Right lobe of liver (tissue), 6 donors: ENCODE measurements at regions of chr16 and their contacts with region 1.

Region 1: DNA sequence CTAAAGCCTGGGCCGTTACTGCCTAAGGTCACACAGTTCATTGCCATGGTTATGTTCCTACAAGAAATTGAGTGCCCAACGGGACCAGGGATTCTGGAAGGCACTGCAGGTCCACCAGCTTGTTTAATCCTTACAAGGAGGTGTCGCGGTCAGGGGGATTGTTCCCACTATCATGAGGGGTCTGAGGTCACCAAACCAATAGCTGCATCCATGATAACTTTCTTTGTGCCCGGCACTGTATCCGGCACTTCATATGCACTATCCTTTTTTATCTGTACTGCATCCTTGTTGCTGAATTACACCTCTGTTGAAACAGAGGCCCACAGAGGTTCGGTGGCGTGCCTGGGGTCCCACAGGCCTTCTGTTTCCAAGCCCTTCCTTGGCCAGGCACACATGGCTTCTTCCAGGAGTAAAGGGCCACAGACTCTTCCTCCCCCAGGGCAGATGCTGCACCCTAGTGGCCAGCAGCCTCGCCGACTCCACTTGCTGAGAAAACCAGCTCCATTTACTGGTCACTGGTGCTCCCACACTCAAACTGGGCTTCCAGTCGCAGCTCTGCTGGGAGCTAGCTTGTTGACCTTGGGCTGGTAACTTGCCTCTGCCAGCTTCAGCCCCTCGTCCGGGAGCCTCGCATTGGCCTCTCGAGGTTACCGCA is 82.0 kb upstream of the PLCG2 start:
- DNase-seq: peak; percentile 68 to 77 (median 71)
- ATAC-seq: peak; percentile 69 to 84 (median 75)
- H3K4me3 ChIP-seq: no peak overlapping the region
- H3K27ac ChIP-seq: peak overlapping the region in 1 of 3 donors; percentile 4
- H3K4me1 ChIP-seq: no peaks in the 10 kb centered on the region
- H3K27me3 ChIP-seq: no peaks in the 10 kb centered on the region
- CTCF ChIP-seq: peak; percentile 65 to 78 (median 68)
- POLR2A ChIP-seq: no peak

Region 2: GRCh38 chr16:81610144-81610842 is 86.8 kb before region 1 on chr16:
- intact Hi-C with region 1: loop called in 1 of 2 experiments (anchors 5 kb)
- DNase-seq: peak; percentile 71 to 77 (median 72)
- ATAC-seq: peak; percentile 62 to 84 (median 72)
- H3K4me3 ChIP-seq: no peak overlapping the region
- H3K27ac ChIP-seq: peak overlapping the region in 1 of 3 donors; percentile 38
- H3K4me1 ChIP-seq: peaks cover 0 to 8% (median 0%) of the 10 kb centered on the region in 4 donors
- H3K27me3 ChIP-seq: no peaks in the 10 kb centered on the region
- CTCF ChIP-seq: no peak
- POLR2A ChIP-seq: no peak

Region 3: DNA sequence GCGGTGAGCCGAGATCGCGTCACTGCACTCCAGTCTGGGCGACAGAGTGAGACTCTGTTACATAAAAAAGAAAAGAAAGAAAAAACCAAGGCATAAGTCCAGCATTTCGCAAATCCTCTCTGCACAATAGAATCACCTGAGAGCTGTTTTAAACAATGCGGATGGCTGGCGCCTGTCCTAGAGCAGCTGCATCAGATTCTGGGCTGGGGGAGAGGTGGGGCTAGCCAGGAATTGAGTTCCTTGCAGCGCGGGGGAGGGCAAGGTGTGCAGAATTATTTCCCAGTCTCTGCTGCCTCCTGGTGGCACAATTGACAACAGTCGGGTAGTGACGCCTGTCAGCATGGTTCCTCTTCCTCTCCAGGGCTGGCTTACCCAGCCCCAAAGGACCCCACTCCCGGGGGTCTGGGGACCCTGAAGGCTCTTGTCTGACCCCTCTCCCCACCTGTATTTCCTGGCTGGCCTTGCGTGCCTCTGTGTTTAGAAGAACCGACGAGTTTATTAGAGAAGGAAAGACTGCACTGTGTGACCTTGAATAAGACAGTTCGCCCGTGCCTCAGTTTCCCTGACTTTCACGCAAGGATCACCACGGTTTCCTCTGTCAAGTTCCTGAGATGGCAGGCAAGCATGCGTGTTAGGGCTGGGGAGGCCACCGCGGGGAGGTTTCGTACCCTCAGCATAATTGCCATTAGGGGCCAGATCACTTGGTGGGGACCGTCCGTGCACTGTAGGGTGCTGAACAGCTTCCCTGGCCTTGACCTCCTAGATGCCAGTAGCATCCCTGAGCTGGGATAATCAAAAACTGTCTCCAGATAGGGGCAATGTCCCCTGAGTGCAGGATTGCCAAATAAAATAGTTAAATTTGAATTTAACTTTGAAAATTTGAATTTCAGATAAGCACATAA is 41.0 kb after region 1 on chr16:
- intact Hi-C with region 1: no loop called
- DNase-seq: peak; percentile 85 to 88 (median 85)
- ATAC-seq: peak; percentile 97 to 98 (median 98)
- H3K4me3 ChIP-seq: peak overlapping the region in 2 of 3 donors; percentile 21 to 30
- H3K27ac ChIP-seq: no peak overlapping the region
- H3K4me1 ChIP-seq: peaks cover 0 to 10% (median 0%) of the 10 kb centered on the region in 4 donors
- H3K27me3 ChIP-seq: no peaks in the 10 kb centered on the region
- CTCF ChIP-seq: peak; percentile 86 to 95 (median 88)
- POLR2A ChIP-seq: no peak